Mammary epithelial cell (primary cell): ENCODE measurements at regions of chr9 and their contacts with region 1.

Region 1: DNA sequence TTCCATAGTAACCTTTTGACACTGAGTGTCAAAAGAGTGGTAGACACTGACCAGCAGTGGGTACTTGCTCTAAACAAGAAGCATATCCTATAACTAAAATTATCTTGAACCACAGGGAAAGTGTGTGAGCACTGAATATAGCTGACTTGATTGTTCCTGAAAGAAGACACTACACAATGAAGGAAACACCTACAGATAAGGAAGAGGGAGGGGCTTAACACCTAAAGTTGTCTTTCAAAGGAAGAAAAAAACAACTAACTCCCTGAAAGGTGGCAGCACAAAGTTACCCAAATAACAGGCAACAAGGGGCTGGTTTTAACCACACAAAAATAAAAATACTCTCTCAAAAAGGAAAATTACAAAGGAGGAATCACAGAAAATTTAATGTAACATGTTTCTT is 6.6 kb downstream of the ELAVL2 start:
- DNase-seq: no peak
- H3K4me3 ChIP-seq: no peak overlapping the region
- H3K27ac ChIP-seq: no peak overlapping the region
- H3K4me1 ChIP-seq: peaks cover 24% of the 10 kb centered on the region
- H3K27me3 ChIP-seq: no peaks in the 10 kb centered on the region
- CTCF ChIP-seq: no peak

Region 2: GRCh38 chr9:23731353-23731752 is 88.0 kb before region 1 on chr9:
- CTCF ChIA-PET with region 1: no interaction called
- dilution Hi-C with region 1: no loop called
- in situ Hi-C with region 1: no loop called
- intact Hi-C with region 1: no loop called
- DNase-seq: no peak
- H3K4me3 ChIP-seq: no peak overlapping the region
- H3K27ac ChIP-seq: no peak overlapping the region
- H3K4me1 ChIP-seq: no peaks in the 10 kb centered on the region
- H3K27me3 ChIP-seq: no peaks in the 10 kb centered on the region
- CTCF ChIP-seq: no peak

Region 3: DNA sequence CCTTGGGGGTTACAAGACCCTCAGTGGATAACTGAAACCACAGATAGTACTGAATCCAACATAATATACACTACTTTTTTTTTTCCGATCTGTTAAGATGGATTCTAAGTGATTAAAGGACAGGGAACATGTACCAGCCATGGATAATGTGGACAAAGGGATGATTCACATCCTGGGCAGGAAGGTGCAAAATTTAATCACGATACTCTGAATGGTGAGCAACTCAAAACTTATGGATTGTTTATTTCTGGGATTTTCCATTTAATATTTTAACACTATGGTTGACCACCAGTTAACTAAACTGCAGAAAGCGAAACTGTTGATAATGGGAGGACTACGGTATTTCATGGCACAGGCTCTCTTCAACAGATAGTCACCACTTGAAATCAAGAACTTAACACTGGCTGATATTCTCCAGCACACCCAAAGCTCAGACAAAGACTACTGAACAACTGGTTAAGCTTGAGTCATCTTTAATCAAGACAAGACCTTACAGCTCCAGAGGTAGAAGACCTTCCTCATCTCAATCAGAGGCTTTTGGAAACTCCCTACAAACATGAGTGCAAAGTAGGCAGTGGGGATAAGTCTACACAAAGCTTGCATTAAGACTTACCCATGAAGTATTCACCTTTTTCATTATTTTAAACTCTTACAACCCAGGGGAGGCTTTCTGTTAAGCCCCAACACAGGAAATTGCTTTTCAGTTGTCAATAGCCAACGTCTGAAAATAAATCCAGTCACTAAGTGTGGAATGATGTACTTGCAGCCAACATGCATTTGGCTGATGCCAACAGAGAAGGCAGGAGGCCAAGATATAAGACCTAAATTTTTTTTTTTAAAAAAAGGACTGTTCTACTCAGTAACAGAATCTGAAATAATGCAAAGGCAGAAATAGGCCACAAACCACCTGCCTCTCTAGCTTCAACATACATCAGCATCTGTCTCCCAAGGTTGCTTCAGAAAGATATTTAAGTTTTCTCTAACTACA is 72.0 kb before region 1 on chr9:
- CTCF ChIA-PET with region 1: no interaction called
- dilution Hi-C with region 1: loop called (anchors 5 kb)
- in situ Hi-C with region 1: no loop called
- intact Hi-C with region 1: no loop called
- DNase-seq: peak; percentile 74
- H3K4me3 ChIP-seq: peak overlapping the region in 1 of 3 experiments; percentile 4
- H3K27ac ChIP-seq: peak overlapping the region; percentile 38
- H3K4me1 ChIP-seq: peaks cover 31% of the 10 kb centered on the region
- H3K27me3 ChIP-seq: no peaks in the 10 kb centered on the region
- CTCF ChIP-seq: no peak